Prostate gland (tissue), 2 donors: ENCODE measurements at regions of chr4 and their contacts with region 1.

Region 1: DNA sequence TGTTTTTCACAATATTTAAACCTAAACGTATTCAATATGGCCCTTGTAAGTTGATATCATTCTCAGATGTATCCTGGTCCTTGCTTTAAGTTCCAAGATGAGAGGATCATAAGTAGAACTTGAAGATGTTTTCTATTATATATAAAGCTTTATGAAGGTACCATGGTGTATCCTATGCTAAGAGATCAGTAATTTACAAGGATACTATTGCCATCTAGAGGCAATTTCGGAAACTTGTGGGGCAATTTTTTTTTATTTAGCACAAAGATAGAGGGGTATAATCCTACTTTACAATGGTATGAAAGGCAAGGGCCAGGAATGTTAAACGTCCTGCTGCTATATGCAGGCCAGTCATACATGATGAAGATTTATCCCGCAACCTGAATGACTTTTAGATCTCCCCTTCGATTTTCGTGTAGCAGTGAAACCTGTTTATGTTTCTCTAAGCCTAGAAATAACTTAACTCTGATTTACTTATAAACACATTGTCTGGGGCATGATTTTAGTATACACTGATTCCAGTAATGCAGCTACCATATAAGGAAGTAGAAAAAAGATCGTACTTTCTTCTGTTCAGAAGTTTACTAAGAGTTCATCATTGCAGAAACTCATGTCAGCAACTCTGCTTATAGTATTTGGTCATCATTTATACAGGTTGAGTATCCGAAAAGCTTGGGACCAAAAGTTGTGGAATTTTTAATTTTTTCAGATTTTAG is 2.6 kb downstream of the SLC25A31 start:
- DNase-seq: no peak
- H3K4me3 ChIP-seq: no peak overlapping the region
- H3K27ac ChIP-seq: no peak overlapping the region
- H3K4me1 ChIP-seq: no peaks in the 10 kb centered on the region
- H3K27me3 ChIP-seq: no peaks in the 10 kb centered on the region
- CTCF ChIP-seq: peak in 3 of 4 experiments; percentile 42 to 65 (median 64)
- POLR2A ChIP-seq: no peak

Region 2: GRCh38 chr4:127463883-127464282 is 268.9 kb before region 1 on chr4:
- intact Hi-C with region 1: no loop called
- DNase-seq: no peak
- H3K4me3 ChIP-seq: no peak overlapping the region
- H3K27ac ChIP-seq: no peak overlapping the region
- H3K4me1 ChIP-seq: no peaks in the 10 kb centered on the region
- H3K27me3 ChIP-seq: no peaks in the 10 kb centered on the region
- CTCF ChIP-seq: no peak
- POLR2A ChIP-seq: no peak

Region 3: GRCh38 chr4:127604949-127605709 is 127.6 kb before region 1 on chr4:
- intact Hi-C with region 1: loop called (anchors 1 kb)
- DNase-seq: no peak
- H3K4me3 ChIP-seq: no peak overlapping the region
- H3K27ac ChIP-seq: no peak overlapping the region
- H3K4me1 ChIP-seq: no peaks in the 10 kb centered on the region
- H3K27me3 ChIP-seq: no peaks in the 10 kb centered on the region
- CTCF ChIP-seq: peak; percentile 47 to 75 (median 56)
- POLR2A ChIP-seq: no peak